Endothelial cell of umbilical vein (primary cell): ENCODE measurements at regions of chr20 and their contacts with region 1.

Region 1: DNA sequence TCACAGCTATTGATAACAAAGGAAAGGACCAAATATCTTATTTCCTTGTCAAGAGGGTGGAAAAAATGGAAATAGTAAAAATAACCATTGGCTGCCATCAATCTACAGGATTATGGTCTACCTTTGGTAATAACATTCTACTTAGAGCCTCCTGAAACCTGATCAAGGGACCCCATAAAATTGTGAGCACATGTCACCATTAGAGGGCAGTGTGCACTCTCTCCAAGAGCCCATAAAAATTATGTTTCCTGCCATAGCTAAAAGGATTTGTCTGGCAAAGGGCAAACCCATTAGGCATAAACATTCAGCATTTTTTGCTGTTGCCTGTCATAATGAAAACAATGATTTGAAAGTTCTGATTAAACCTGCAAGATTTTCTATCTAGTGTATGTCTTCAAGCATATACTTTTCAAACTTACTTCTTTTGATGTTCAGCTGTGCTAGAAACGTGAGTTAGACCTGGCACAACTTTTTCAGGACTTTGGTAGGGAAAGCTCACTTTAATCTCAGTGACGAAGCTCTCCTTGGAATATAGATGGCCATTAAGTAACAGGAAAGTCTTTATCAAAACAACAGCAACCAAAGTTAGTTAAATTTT is 120.7 kb upstream of the ZFP64 start:
- DNase-seq: peak; percentile 82
- H3K4me3 ChIP-seq: no peak overlapping the region
- H3K27ac ChIP-seq: no peak overlapping the region
- H3K4me1 ChIP-seq: no peaks in the 10 kb centered on the region
- H3K27me3 ChIP-seq: no peaks in the 10 kb centered on the region
- CTCF ChIP-seq: peak; percentile 61 to 63
- POLR2A ChIP-seq: no peak

Region 2: DNA sequence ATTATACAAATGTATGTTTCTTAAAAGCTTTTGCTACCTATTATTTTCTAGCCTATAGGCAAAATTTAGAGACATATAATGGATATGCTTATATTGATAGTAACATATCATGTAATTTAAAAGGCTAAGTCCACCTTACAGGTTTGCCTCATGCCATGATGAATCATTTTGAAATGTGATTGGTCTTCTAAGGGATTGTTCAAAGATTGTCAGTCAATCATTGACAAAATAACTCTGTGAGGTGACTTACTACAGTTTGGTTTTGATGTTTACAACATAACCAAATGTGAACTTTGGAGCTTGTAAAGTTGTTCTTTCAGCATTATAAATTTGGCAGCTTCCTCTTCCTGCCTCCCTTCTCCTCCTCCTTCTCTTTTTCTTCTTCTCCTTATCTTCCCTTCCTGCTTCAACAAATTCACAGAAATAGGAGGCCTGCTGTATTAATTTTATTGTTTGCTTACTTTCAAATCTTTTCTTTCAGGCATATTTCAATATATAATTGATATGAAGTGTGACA is 80.9 kb before region 1 on chr20:
- CTCF ChIA-PET with region 1: no interaction called
- POLR2A ChIA-PET with region 1: no interaction called
- dilution Hi-C with region 1: no loop called
- intact Hi-C with region 1: no loop called
- DNase-seq: no peak
- H3K4me3 ChIP-seq: no peak overlapping the region
- H3K27ac ChIP-seq: no peak overlapping the region
- H3K4me1 ChIP-seq: no peaks in the 10 kb centered on the region
- H3K27me3 ChIP-seq: peaks cover 0 to 1% of the 10 kb centered on the region in 2 experiments
- CTCF ChIP-seq: no peak
- POLR2A ChIP-seq: no peak

Region 3: GRCh38 chr20:52289956-52290565 is 22.2 kb before region 1 on chr20:
- CTCF ChIA-PET with region 1: interaction called, 14 read pairs
- POLR2A ChIA-PET with region 1: no interaction called
- dilution Hi-C with region 1: no loop called
- intact Hi-C with region 1: no loop called
- DNase-seq: peak; percentile 16
- H3K4me3 ChIP-seq: no peak overlapping the region
- H3K27ac ChIP-seq: no peak overlapping the region
- H3K4me1 ChIP-seq: peaks cover 10% of the 10 kb centered on the region
- H3K27me3 ChIP-seq: peaks cover 0 to 3% of the 10 kb centered on the region in 2 experiments
- CTCF ChIP-seq: no peak
- POLR2A ChIP-seq: no peak

Region 4: GRCh38 chr20:52379723-52380336 is 67.6 kb after region 1 on chr20:
- CTCF ChIA-PET with region 1: interaction called, 5 read pairs
- POLR2A ChIA-PET with region 1: no interaction called
- dilution Hi-C with region 1: no loop called
- intact Hi-C with region 1: loop called (anchors 1 kb)
- DNase-seq: peak; percentile 52
- H3K4me3 ChIP-seq: no peak overlapping the region
- H3K27ac ChIP-seq: no peak overlapping the region
- H3K4me1 ChIP-seq: no peaks in the 10 kb centered on the region
- H3K27me3 ChIP-seq: no peaks in the 10 kb centered on the region
- CTCF ChIP-seq: peak; percentile 84 to 90
- POLR2A ChIP-seq: no peak

Region 5: DNA sequence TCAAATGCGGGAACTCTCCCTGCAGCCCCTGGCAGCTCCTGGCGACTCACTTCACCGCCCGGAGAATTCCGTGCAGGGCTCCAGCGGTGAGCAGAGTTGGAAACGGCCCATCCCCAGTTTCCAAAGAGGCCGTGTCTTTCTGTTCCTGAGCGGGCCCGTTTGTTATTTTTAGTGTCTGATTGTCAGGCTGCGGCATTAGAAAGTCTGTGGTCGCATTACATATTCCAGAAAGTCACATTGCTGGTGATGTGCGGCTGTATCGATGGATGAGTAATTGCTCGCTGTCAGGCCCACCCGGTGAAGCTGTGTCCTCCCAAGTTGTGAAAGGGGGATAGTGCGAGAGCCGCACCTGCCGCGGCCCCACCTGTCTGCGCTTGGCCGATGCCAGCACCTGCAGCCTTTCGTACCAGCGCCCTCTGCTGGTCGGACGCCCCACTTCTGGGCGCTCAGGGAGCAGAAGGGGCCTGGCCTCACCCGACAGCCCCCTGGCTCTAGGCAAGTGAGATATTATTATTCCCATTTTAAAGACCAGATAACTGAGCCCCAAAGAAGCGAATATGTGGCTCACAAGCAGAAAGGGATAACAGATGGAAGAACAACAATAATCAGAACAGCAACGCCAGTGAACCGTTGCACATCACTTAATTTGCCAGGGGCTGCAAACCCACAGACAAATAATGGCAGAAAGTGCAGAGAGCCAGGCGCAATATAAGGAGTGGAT is 904.8 kb after region 1 on chr20:
- CTCF ChIA-PET with region 1: interaction called, 102 read pairs
- POLR2A ChIA-PET with region 1: no interaction called
- dilution Hi-C with region 1: no loop called
- intact Hi-C with region 1: loop called (anchors 1 kb)
- DNase-seq: peak; percentile 19
- H3K4me3 ChIP-seq: no peak overlapping the region
- H3K27ac ChIP-seq: no peak overlapping the region
- H3K4me1 ChIP-seq: no peaks in the 10 kb centered on the region
- H3K27me3 ChIP-seq: no peaks in the 10 kb centered on the region
- CTCF ChIP-seq: peak; percentile 74 to 89
- POLR2A ChIP-seq: no peak

Region 6: DNA sequence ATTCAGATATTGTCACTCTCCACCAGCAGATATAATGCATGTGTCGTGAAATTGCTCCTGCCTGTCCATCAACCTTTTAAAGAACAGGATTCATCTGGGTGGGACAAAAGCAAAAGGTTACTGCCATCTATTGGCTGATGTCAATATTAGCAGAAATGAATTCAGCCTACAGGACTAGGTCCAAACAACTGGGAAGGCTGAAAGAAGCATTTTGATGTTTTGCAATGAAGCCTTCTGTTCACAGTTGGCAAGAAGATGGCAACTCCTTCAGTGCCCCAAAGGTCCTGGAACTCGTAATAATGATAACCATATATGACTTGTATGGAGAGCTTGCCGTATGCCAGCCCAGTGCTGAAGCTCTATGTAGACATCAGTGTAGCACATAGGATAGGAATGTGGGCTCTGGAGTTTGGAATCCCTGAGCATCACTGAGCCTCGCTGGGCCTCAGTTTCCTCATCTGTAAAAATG is 1750.6 kb after region 1 on chr20:
- CTCF ChIA-PET with region 1: interaction called, 36 read pairs
- POLR2A ChIA-PET with region 1: no interaction called
- dilution Hi-C with region 1: no loop called
- intact Hi-C with region 1: no loop called
- DNase-seq: peak; percentile 35
- H3K4me3 ChIP-seq: no peak overlapping the region
- H3K27ac ChIP-seq: no peak overlapping the region
- H3K4me1 ChIP-seq: no peaks in the 10 kb centered on the region
- H3K27me3 ChIP-seq: no peaks in the 10 kb centered on the region
- CTCF ChIP-seq: peak; percentile 40 to 44
- POLR2A ChIP-seq: no peak